H1 (cell line): ENCODE measurements at regions of chr16 and their contacts with region 1.

Region 1: GRCh38 chr16:67207857-67208519 is 9.1 kb downstream of the ELMO3 start:
- DNase-seq: no peak
- H3K4me3 ChIP-seq: no peak overlapping the region
- H3K27ac ChIP-seq: no peak overlapping the region
- H3K4me1 ChIP-seq: peaks cover 0 to 10% (median 1%) of the 10 kb centered on the region in 4 experiments; a peak in 2 of 7 replicates
- H3K27me3 ChIP-seq: peaks cover 0 to 6% (median 4%) of the 10 kb centered on the region in 4 experiments; a peak in 4 of 7 replicates
- CTCF ChIP-seq: no peak
- EP300 ChIP-seq: no peak
- POLR2A ChIP-seq: peak in 1 of 2 experiments; percentile 19; a peak in 1 of 3 replicates
- RAD21 ChIP-seq: no peak

Region 2: DNA sequence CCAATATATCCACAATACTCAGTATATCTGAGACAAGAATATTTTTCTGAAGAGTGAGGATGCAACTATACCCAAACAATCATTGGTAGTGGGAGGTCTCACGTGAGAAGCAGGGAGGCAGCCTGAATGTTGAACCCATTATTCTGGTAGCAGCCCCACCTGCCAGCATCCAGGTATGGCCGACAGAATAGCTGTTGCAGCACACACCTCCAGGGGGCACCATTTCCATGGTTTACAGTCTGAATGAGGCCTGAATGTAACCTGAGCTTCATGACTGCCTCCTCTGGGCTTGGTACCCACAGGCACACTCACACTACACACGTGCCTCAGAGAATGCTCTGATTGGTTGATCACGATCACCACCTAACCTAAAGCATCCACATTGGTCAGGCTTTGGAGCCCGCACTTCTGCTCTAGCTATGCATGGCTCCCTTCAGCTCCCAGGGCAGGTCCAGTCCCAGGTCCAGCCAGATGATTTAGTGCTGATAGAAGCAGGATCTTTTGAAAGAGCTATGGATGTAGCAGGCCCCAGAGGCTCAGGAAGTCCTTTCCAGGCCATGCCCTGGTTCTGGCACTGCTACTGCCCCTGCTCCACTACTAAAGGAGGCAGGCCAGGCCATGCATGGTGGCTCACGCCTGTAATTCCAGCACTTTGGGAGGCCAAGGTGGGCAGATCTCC is 190.0 kb before region 1 on chr16:
- CTCF ChIA-PET with region 1: no interaction called
- POLR2A ChIA-PET with region 1: no interaction called
- DNase-seq: peak; percentile 78 to 96
- H3K4me3 ChIP-seq: no peak overlapping the region
- H3K27ac ChIP-seq: no peak overlapping the region
- H3K4me1 ChIP-seq: peaks cover 0 to 6% (median 4%) of the 10 kb centered on the region in 4 experiments; a peak in 4 of 7 replicates
- H3K27me3 ChIP-seq: peaks cover 16 to 35% (median 26%) of the 10 kb centered on the region in 4 experiments
- CTCF ChIP-seq: peak; percentile 82 to 99 (median 89)
- EP300 ChIP-seq: no peak
- POLR2A ChIP-seq: no peak
- RAD21 ChIP-seq: peak; percentile 89 to 91

Region 3: GRCh38 chr16:67183627-67184328 is 24.2 kb before region 1 on chr16 and contains the start of gene MATCAP1:
- CTCF ChIA-PET with region 1: interaction called, 78 read pairs
- POLR2A ChIA-PET with region 1: interaction called, 6 read pairs
- DNase-seq: peak; percentile 87 to 95
- H3K4me3 ChIP-seq: peak within 1 kb of the TSS; percentile 73 to 90 (median 85)
- H3K27ac ChIP-seq: peak within 1 kb of the TSS; percentile 98
- H3K4me1 ChIP-seq: peaks cover 0 to 19% (median 12%) of the 10 kb centered on the region in 4 experiments; a peak in 5 of 7 replicates
- H3K27me3 ChIP-seq: peaks cover 8 to 35% (median 21%) of the 10 kb centered on the region in 4 experiments
- CTCF ChIP-seq: no peak
- EP300 ChIP-seq: no peak
- POLR2A ChIP-seq: peak in 1 of 2 experiments; percentile 79; a peak in 2 of 3 replicates
- RAD21 ChIP-seq: no peak
- total RNA-seq, gene MATCAP1: 22.9 and 23.1 TPM in 2 replicates

Region 4: DNA sequence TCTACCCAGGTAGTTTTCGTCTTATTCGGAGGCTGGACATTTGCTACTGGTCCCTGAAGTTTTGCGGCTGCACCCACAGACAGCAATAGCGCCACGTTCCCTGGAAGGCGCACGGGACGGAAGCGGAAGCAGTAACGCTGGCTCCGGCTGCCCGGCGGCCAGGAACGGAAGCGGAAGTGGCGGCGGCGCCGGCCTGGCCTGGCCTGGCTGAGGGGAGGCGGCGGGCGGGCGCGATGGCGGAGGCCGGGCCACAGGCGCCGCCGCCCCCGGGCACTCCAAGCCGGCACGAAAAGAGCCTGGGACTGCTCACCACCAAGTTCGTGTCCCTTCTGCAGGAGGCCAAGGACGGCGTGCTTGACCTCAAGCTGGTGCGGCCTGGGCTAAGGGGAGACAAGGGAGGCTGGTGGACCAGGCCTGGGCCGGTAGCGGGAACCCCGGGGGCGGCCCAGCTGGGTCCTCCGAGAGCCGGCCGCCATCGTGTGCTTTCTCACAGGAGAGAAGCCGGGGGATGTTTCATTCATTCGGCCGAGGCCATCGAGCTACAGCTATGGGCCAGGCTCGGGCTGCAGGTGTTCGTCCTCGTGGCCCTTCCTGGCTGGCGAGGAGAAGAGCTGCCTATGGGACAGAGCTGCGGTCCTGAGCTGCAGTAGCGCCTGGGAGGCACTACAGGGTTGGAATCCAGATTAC is 15.8 kb before region 1 on chr16 and contains the start of gene E2F4:
- CTCF ChIA-PET with region 1: interaction called, 111 read pairs
- POLR2A ChIA-PET with region 1: interaction called, 4 read pairs
- DNase-seq: peak in 1 of 2 experiments; percentile 88
- H3K4me3 ChIP-seq: peak within 1 kb of the TSS; percentile 96 to 99 (median 98)
- H3K27ac ChIP-seq: peak within 1 kb of the TSS; percentile 41
- H3K4me1 ChIP-seq: peaks cover 0 to 7% (median 2%) of the 10 kb centered on the region in 4 experiments; a peak in 4 of 7 replicates
- H3K27me3 ChIP-seq: no peaks in the 10 kb centered on the region
- CTCF ChIP-seq: 0 out of 4 replicates have a peak, but pooled peaks of 1 of the 3 experiments have one; percentile 0
- EP300 ChIP-seq: 0 out of 3 replicates have a peak, but pooled peaks of 1 of the 2 experiments have one; percentile 74
- POLR2A ChIP-seq: peak in 1 of 2 experiments; percentile 51; a peak in 1 of 3 replicates
- RAD21 ChIP-seq: no peak
- total RNA-seq, gene E2F4: 78.0 and 79.9 TPM in 2 replicates

Region 5: GRCh38 chr16:67226804-67227557 is 19.0 kb after region 1 on chr16 and contains the start of gene TMEM208:
- CTCF ChIA-PET with region 1: interaction called, 25 read pairs
- POLR2A ChIA-PET with region 1: interaction called, 20 read pairs
- DNase-seq: peak; percentile 96 to 99
- H3K4me3 ChIP-seq: peak within 1 kb of the TSS; percentile 83 to 96 (median 94)
- H3K27ac ChIP-seq: peak within 1 kb of the TSS; percentile 74
- H3K4me1 ChIP-seq: peaks cover 0 to 6% (median 3%) of the 10 kb centered on the region in 4 experiments; a peak in 3 of 7 replicates
- H3K27me3 ChIP-seq: no peaks in the 10 kb centered on the region; a peak in 4 of 7 replicates
- CTCF ChIP-seq: peak in 2 of 3 experiments; percentile 17 to 27; a peak in 3 of 4 replicates
- EP300 ChIP-seq: no peak
- POLR2A ChIP-seq: peak; percentile 66 to 94
- RAD21 ChIP-seq: no peak
- total RNA-seq, gene TMEM208: 37.7 and 37.9 TPM in 2 replicates